ENCODE measurements at regions of chr20 and their contacts with region 1.

Region 1: DNA sequence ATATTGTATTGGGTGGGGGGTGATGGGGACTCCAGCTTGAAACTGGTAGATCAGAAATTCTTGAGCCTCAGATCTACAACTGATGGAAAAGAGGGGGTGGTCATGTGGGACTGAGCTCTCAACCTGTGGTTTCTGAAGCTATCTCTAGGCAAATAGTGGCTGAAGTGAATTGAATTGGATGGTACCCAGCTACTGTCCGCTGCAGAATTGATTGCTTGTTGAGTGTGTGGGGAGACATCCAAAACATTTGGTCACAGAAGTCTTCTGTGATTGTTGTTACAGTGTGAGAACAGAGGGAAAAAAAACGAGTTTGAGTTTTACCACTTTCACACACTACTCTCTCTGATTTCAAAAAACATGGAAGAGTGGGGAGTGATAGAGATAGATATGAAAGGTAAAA is 14.8 kb downstream of the CDS2 start:
- H3K4me3 Mint-ChIP-seq: no peak overlapping the region
- H3K27ac Mint-ChIP-seq: peak overlapping the region; percentile 95
- H3K4me1 Mint-ChIP-seq: peaks cover 59% of the 10 kb centered on the region
- H3K27me3 Mint-ChIP-seq: no peaks in the 10 kb centered on the region

Region 2: GRCh38 chr20:5156675-5157448 is 15.2 kb after region 1 on chr20:
- intact Hi-C with region 1: no loop called
- H3K4me3 Mint-ChIP-seq: no peak overlapping the region
- H3K27ac Mint-ChIP-seq: peak overlapping the region; percentile 23
- H3K4me1 Mint-ChIP-seq: peaks cover 62% of the 10 kb centered on the region
- H3K27me3 Mint-ChIP-seq: no peaks in the 10 kb centered on the region

Region 3: GRCh38 chr20:5177071-5177470 is 35.5 kb after region 1 on chr20:
- intact Hi-C with region 1: loop called (anchors 5 kb)
- H3K4me3 Mint-ChIP-seq: no peak overlapping the region
- H3K27ac Mint-ChIP-seq: no peak overlapping the region
- H3K4me1 Mint-ChIP-seq: peaks cover 46% of the 10 kb centered on the region
- H3K27me3 Mint-ChIP-seq: no peaks in the 10 kb centered on the region

Measured in dendritic cell treated with granulocyte-macrophage colony-stimulating factor and Interleukin-4, amounts not matched to agents 40 ng/mL and 50 ng/mL, for 4 days (primary cell).